ENCODE measurements at regions of chr19 and their contacts with region 1.

Region 1: DNA sequence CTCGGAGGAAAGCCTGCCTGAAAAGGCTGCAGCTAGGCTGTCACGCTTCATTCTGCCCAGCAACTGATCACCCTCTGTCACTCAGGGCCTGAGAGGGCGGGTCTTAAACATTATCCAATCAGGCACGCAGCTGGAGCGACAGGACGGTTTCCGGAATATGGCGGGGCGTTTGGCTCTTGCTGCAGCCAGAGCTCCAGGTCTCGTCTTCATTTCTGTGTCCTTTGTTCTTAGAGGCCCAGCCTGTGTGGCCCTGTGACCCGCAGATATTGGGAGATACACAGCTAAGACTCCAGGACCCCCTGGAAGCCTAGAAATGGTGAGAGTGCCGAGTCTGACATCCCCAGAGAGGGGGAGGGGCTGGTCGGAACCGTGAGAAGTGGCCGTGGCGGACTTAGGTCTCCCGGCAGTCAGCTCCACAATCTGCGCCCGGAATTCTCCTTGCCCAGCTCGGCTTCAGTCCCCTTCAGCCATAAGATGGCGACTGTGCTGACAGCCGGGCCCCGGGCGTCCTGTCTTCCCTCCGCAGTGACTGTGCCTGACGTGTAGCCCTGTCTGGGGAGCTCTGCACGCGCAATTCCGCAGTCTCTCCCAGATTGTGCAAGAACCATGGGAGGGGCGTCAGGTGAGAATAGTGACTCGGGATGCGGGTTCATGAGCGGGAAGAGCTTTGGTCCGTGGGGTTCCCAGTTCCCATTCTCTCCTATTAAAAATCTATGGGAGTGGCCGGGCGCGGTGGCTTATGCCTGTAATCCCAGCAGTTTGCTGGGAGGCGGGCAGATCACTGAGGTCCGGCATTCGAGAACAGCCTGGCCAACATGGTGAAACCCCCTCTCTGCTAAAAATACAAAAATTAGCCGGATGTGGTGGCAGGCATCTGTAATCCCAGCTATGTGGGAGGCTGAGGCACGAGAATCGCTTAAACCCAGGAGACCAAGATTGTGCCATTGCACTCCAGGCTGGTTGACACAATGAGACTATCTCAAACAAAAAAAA is at the start of gene ZNF429:
- DNase-seq: peak; percentile 64 to 94 (median 90)
- ATAC-seq: peak; percentile 100
- H3K4me3 ChIP-seq: peak within 1 kb of the TSS; percentile 100
- H3K4me3 Mint-ChIP-seq: peak within 1 kb of the TSS; percentile 97 to 100 (median 100)
- H3K27ac ChIP-seq: peak within 1 kb of the TSS; percentile 94
- H3K27ac Mint-ChIP-seq: peak within 1 kb of the TSS; percentile 98 to 100 (median 99)
- H3K4me1 ChIP-seq: peaks cover 16 to 27% of the 10 kb centered on the region in 2 donors
- H3K4me1 Mint-ChIP-seq: peaks cover 8 to 56% (median 50%) of the 10 kb centered on the region in 7 donors
- H3K27me3 ChIP-seq: no peaks in the 10 kb centered on the region
- H3K27me3 Mint-ChIP-seq: no peaks in the 10 kb centered on the region
- total RNA-seq, gene ZNF429: 6.4 to 30.7 (median 25.0) TPM

Region 2: DNA sequence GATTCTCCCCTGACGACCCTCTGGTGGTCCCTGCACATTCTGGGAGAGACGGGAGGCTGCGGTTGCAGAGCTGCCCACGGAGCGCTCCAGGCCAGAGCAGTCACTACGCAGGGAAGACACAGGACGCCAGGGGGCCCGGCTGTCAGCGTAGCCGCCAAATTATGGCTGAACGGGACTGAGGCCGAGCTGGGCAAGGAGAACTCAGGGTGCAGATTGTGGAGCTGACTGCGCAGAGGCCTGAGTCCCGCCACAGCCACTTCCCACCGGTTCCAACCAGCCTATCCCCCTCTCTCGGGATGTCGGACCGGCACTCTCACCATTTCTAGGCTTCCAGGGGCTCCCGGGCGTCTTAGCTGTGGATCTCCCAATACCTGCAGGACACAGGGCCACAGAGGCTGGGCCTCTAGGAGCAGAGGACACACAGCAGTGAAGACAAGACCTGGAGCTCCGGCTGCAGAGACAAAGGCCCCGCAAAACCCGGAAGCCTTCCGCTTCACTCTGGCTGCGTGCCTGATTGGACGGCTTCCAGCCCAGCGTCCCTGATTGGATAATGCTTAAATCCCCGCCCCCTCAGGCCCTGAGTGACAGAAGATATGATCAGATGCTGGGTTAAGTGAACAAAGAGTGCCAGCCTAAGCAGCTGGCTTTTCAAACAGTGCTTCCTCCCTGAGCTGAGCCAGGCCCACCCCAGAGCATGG is 940.3 kb before region 1 on chr19 and contains the start of gene ZNF737:
- CTCF ChIA-PET with region 1: no interaction called
- POLR2A ChIA-PET with region 1: interaction called, 6 read pairs
- intact Hi-C with region 1: loop called in 1 of 2 experiments (anchors 1 kb)
- DNase-seq: peak; percentile 78 to 95 (median 89)
- ATAC-seq: peak; percentile 97
- H3K4me3 ChIP-seq: peak within 1 kb of the TSS; percentile 92
- H3K4me3 Mint-ChIP-seq: peak within 1 kb of the TSS; percentile 94 to 100 (median 99)
- H3K27ac ChIP-seq: peak within 1 kb of the TSS; percentile 82
- H3K27ac Mint-ChIP-seq: peak within 1 kb of the TSS; percentile 94 to 99 (median 97)
- H3K4me1 ChIP-seq: no peaks in the 10 kb centered on the region
- H3K4me1 Mint-ChIP-seq: peaks cover 0 to 39% (median 37%) of the 10 kb centered on the region in 7 donors
- H3K27me3 ChIP-seq: no peaks in the 10 kb centered on the region
- H3K27me3 Mint-ChIP-seq: no peaks in the 10 kb centered on the region
- total RNA-seq, gene ZNF737: 13.3 to 43.2 (median 14.9) TPM

Region 3: DNA sequence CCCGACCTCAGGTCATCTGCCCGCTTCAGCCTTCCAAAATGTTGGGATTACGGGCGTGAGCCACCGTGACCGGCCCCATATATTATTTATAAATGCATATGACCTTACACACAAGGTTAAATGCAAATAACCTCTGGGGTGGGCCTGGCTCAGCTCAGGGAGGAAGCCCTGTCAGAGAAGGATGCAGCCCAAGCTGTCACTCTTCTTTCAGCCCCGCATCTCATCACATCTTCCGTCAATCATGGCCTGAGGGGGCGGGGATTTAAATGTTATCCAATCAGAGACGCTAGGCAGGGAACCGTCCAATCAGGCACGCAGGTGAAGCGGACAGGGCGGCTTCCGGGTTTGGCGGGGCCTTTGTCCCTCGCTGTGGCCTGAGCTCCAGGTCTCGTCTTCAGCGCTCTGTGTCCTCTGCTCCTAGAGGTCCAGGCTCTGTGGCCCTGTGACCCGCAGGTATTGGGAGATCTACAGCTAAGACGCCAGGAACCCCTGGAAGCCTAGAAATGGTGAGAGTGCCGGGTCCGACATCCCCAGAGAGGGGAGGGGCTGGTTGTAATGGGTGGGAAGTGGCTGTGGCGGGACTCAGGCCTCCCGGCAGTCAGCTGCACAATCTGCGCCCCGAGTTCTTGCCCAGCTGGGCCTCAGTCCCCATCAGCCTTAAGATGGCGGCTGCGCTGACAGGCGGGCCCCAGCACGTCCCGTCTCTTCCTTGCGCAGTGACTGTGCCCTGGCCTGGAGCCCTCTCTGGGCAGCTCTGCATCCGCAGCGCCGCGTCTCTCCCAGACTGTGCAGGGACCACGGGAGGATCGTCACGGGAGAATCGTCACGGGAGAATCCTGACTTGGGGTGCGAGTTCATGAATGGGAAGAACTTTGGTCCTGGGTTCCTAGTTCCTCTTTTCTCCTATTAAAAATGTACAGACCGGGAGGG is 485.2 kb before region 1 on chr19 and contains the start of gene ZNF430:
- CTCF ChIA-PET with region 1: no interaction called
- POLR2A ChIA-PET with region 1: no interaction called
- intact Hi-C with region 1: loop called in 1 of 2 experiments (anchors 5 kb)
- DNase-seq: peak; percentile 75 to 95 (median 93)
- ATAC-seq: peak; percentile 98
- H3K4me3 ChIP-seq: peak within 1 kb of the TSS; percentile 95
- H3K4me3 Mint-ChIP-seq: peak within 1 kb of the TSS; percentile 99 to 100 (median 100)
- H3K27ac ChIP-seq: peak within 1 kb of the TSS; percentile 97
- H3K27ac Mint-ChIP-seq: peak within 1 kb of the TSS; percentile 99 to 100 (median 100)
- H3K4me1 ChIP-seq: peaks cover 14 to 20% of the 10 kb centered on the region in 2 donors
- H3K4me1 Mint-ChIP-seq: peaks cover 32 to 56% (median 52%) of the 10 kb centered on the region in 7 donors
- H3K27me3 ChIP-seq: no peaks in the 10 kb centered on the region
- H3K27me3 Mint-ChIP-seq: no peaks in the 10 kb centered on the region
- total RNA-seq, gene ZNF430: 26.4 to 52.0 (median 42.2) TPM

Region 4: DNA sequence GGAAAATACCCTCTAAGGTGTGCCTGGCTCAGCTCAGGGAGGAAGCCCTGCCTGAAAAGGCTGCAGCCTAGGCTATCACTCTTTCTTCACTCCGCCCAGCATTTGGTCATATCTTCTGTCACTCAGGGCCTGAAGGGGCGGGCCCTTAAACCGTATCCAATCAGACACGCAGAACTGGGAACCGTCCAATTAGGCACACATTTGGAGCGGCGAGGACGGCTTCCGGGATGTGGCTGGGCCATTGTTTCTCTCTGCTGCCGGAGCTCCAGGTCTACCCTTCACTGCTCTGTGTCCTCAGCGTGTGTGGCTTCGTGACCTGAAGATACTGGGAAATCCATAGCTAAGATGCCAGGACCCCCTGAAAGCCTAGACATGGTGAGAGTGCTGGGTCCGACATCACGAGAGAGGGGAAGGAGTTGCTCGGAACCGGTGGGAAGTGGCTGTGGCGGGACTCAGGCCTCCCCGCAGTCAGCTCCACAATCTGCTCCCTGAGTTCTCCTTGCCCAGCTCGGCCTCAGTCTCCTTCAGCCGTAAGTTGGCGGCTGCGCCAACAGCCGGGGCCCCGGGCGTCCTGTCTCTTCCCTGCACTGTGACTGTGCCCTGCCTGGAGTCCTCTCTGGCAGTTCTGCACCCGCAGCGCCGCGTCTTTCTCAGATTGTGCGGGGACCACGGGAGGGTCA is 108.7 kb before region 1 on chr19 and contains the start of gene ZNF493:
- CTCF ChIA-PET with region 1: no interaction called
- POLR2A ChIA-PET with region 1: interaction called, 29 read pairs
- intact Hi-C with region 1: loop called (anchors 1 to 2 kb)
- DNase-seq: peak; percentile 76 to 95 (median 91)
- ATAC-seq: peak; percentile 100
- H3K4me3 ChIP-seq: peak within 1 kb of the TSS; percentile 80
- H3K4me3 Mint-ChIP-seq: peak within 1 kb of the TSS; percentile 90 to 99 (median 97)
- H3K27ac ChIP-seq: peak within 1 kb of the TSS; percentile 77
- H3K27ac Mint-ChIP-seq: peak within 1 kb of the TSS; percentile 68 to 97 (median 92)
- H3K4me1 ChIP-seq: peaks cover 6 to 11% of the 10 kb centered on the region in 2 donors
- H3K4me1 Mint-ChIP-seq: peaks cover 19 to 48% (median 32%) of the 10 kb centered on the region in 7 donors
- H3K27me3 ChIP-seq: no peaks in the 10 kb centered on the region
- H3K27me3 Mint-ChIP-seq: peaks cover 0 to 4% (median 0%) of the 10 kb centered on the region in 5 donors
- total RNA-seq, gene ZNF493: 19.7 to 78.3 (median 34.6) TPM

Region 5: GRCh38 chr19:21586311-21587116 is 80.8 kb after region 1 on chr19:
- CTCF ChIA-PET with region 1: no interaction called
- POLR2A ChIA-PET with region 1: interaction called, 43 read pairs
- intact Hi-C with region 1: loop called in 1 of 2 experiments (anchors 1 kb)
- DNase-seq: peak in 6 of 9 donors; percentile 11 to 43 (median 34)
- ATAC-seq: peak; percentile 69
- H3K4me3 ChIP-seq: peak overlapping the region; percentile 39
- H3K4me3 Mint-ChIP-seq: peak overlapping the region; percentile 47 to 91 (median 82)
- H3K27ac ChIP-seq: peak overlapping the region; percentile 48
- H3K27ac Mint-ChIP-seq: peak overlapping the region in 5 of 9 donors; percentile 73 to 88 (median 80)
- H3K4me1 ChIP-seq: peaks cover 0 to 12% of the 10 kb centered on the region in 2 donors
- H3K4me1 Mint-ChIP-seq: peaks cover 0 to 50% (median 19%) of the 10 kb centered on the region in 7 donors
- H3K27me3 ChIP-seq: no peaks in the 10 kb centered on the region
- H3K27me3 Mint-ChIP-seq: peaks cover 0 to 27% (median 7%) of the 10 kb centered on the region in 5 donors

Region 6: DNA sequence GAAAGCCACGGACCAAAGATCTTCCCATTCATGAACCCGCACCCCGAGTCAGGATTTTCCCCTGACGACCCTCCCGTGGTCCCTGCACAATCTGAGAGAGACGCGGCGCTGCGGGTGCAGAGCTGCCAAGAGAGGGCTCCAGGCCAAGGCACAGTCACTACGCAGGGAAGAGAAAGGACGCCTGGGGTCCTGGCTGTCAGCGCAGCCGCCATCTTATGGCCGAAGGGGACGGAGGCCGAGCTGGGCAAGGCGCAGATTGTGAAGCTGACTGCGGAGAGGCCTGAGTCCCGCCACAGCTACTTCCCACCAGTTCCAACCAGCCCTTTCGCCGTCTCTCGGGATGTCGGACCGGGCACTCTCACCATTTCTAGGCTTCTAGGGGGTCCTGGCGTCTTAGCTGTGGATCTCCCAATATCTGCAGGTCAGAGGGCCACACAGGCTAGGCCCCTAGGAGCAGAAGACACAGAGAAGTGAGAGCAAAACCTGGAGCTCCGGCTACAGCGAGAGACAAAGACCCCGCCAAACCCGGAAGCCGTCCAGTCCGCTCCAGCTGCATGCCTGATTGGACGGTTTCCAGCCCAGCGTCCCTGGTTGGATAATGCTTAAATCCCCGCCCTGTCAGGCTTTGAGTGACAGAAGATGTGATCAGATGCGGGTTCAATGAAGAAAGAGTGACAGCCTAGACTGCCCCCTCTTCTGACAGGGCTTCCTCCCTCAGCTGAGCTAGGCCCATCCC is 261.5 kb after region 1 on chr19 and contains the start of gene ZNF100:
- CTCF ChIA-PET with region 1: no interaction called
- POLR2A ChIA-PET with region 1: interaction called, 9 read pairs
- intact Hi-C with region 1: loop called (anchors 1 kb)
- DNase-seq: peak; percentile 64 to 88 (median 80)
- ATAC-seq: peak; percentile 98
- H3K4me3 ChIP-seq: peak within 1 kb of the TSS; percentile 97
- H3K4me3 Mint-ChIP-seq: peak within 1 kb of the TSS; percentile 92 to 98 (median 97)
- H3K27ac ChIP-seq: peak within 1 kb of the TSS; percentile 81
- H3K27ac Mint-ChIP-seq: peak within 1 kb of the TSS; percentile 89 to 98 (median 92)
- H3K4me1 ChIP-seq: no peaks in the 10 kb centered on the region
- H3K4me1 Mint-ChIP-seq: peaks cover 7 to 43% (median 27%) of the 10 kb centered on the region in 7 donors
- H3K27me3 ChIP-seq: no peaks in the 10 kb centered on the region
- H3K27me3 Mint-ChIP-seq: no peaks in the 10 kb centered on the region
- total RNA-seq, gene ZNF100: 9.5 to 22.5 (median 18.4) TPM